ENCODE measurements at regions of chr15 and their contacts with region 1.

Region 1: GRCh38 chr15:45457641-45458433 is 64.7 kb downstream of the SLC30A4 start:
- DNase-seq: peak; percentile 92
- ATAC-seq: peak; percentile 73
- H3K4me3 ChIP-seq: peak overlapping the region; percentile 29 to 74 (median 49)
- H3K4me3 Mint-ChIP-seq: peak overlapping the region; percentile 84
- H3K27ac ChIP-seq: peak overlapping the region; percentile 52 to 62
- H3K27ac Mint-ChIP-seq: peak overlapping the region; percentile 72
- H3K4me1 ChIP-seq: peaks cover 34 to 37% of the 10 kb centered on the region in 2 donors
- H3K4me1 Mint-ChIP-seq: peaks cover 42% of the 10 kb centered on the region
- H3K27me3 ChIP-seq: no peaks in the 10 kb centered on the region
- H3K27me3 Mint-ChIP-seq: no peaks in the 10 kb centered on the region
- CTCF ChIP-seq: peak; percentile 94

Region 2: GRCh38 chr15:45166834-45167630 is 290.8 kb before region 1 on chr15:
- CTCF ChIA-PET with region 1: interaction called, 21 read pairs
- POLR2A ChIA-PET with region 1: no interaction called
- intact Hi-C with region 1: loop called (anchors 1 kb)
- DNase-seq: peak; percentile 89
- ATAC-seq: peak; percentile 94
- H3K4me3 ChIP-seq: peak overlapping the region; percentile 45 to 84 (median 81)
- H3K4me3 Mint-ChIP-seq: peak overlapping the region; percentile 80
- H3K27ac ChIP-seq: peak overlapping the region; percentile 89 to 96
- H3K27ac Mint-ChIP-seq: peak overlapping the region; percentile 92
- H3K4me1 ChIP-seq: peaks cover 12 to 46% of the 10 kb centered on the region in 2 donors
- H3K4me1 Mint-ChIP-seq: peaks cover 31% of the 10 kb centered on the region
- H3K27me3 ChIP-seq: no peaks in the 10 kb centered on the region
- H3K27me3 Mint-ChIP-seq: no peaks in the 10 kb centered on the region
- CTCF ChIP-seq: peak; percentile 75

Region 3: GRCh38 chr15:45424429-45424828 is 33.4 kb before region 1 on chr15:
- CTCF ChIA-PET with region 1: interaction called, 156 read pairs
- POLR2A ChIA-PET with region 1: no interaction called
- intact Hi-C with region 1: loop called (anchors 5 kb)
- DNase-seq: no peak
- ATAC-seq: no peak
- H3K4me3 ChIP-seq: no peak overlapping the region
- H3K4me3 Mint-ChIP-seq: no peak overlapping the region
- H3K27ac ChIP-seq: no peak overlapping the region
- H3K27ac Mint-ChIP-seq: no peak overlapping the region
- H3K4me1 ChIP-seq: no peaks in the 10 kb centered on the region
- H3K4me1 Mint-ChIP-seq: no peaks in the 10 kb centered on the region
- H3K27me3 ChIP-seq: no peaks in the 10 kb centered on the region
- H3K27me3 Mint-ChIP-seq: no peaks in the 10 kb centered on the region
- CTCF ChIP-seq: no peak

Region 4: DNA sequence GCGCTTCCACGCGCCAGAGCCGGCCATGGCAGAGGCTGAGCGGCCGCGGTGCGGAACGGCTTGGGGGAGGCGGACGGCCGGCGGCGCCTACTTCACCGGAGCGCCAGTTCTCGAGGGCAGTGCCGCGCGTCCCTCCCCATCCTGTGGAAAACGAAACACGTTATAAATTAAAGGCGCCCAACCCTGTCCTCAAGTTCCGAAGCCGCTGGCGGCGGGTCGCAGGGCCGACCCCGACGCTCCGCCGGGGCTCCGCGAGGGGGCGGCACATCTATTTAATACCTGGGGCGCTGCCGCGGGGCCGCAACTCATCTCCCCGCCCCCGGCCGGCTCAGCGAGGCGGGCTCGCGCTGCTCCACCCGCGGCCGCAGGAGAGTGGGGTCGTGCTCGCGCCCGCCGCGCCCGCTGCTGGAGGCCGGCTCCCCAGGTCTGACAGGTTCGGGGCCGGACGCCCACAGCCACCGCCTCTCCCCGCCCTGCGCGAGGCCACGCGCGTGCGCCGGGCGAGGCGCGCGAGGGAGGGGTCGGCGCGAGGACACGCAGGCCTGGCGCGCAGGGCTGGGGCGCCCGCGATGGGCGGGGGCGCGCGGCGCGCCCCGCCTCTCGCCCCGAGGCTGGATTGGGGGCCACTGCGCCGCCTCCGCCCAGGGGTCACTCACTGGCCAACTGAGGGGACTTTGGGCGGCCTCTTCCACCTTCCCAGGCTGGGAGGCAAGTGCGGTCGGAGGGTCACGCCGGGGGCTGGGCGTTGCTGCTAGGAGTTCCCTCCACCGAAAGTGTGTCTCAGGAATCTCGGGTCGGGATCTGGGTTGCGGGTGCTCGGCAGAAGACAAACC is 64.7 kb after region 1 on chr15 and contains the start of gene SLC30A4:
- CTCF ChIA-PET with region 1: interaction called, 3 read pairs
- POLR2A ChIA-PET with region 1: no interaction called
- intact Hi-C with region 1: loop called (anchors 1 kb)
- DNase-seq: peak; percentile 86
- ATAC-seq: peak; percentile 81
- H3K4me3 ChIP-seq: peak within 1 kb of the TSS; percentile 60 to 95 (median 73)
- H3K4me3 Mint-ChIP-seq: peak within 1 kb of the TSS; percentile 94
- H3K27ac ChIP-seq: peak within 1 kb of the TSS; percentile 26 to 64
- H3K27ac Mint-ChIP-seq: peak within 1 kb of the TSS; percentile 92
- H3K4me1 ChIP-seq: peaks cover 26 to 32% of the 10 kb centered on the region in 2 donors
- H3K4me1 Mint-ChIP-seq: peaks cover 43% of the 10 kb centered on the region
- H3K27me3 ChIP-seq: no peaks in the 10 kb centered on the region
- H3K27me3 Mint-ChIP-seq: no peaks in the 10 kb centered on the region
- CTCF ChIP-seq: peak; percentile 71
- total RNA-seq, gene SLC30A4: 9.1 and 11.0 TPM in 2 replicates

Region 5: GRCh38 chr15:45611305-45611704 is 153.5 kb after region 1 on chr15:
- CTCF ChIA-PET with region 1: interaction called, 187 read pairs
- POLR2A ChIA-PET with region 1: interaction called, 3 read pairs
- intact Hi-C with region 1: loop called (anchors 1 kb)
- DNase-seq: peak; percentile 57
- ATAC-seq: peak; percentile 39
- H3K4me3 ChIP-seq: no peak overlapping the region
- H3K4me3 Mint-ChIP-seq: no peak overlapping the region
- H3K27ac ChIP-seq: no peak overlapping the region
- H3K27ac Mint-ChIP-seq: no peak overlapping the region
- H3K4me1 ChIP-seq: peaks cover 15 to 17% of the 10 kb centered on the region in 2 donors
- H3K4me1 Mint-ChIP-seq: peaks cover 12% of the 10 kb centered on the region
- H3K27me3 ChIP-seq: no peaks in the 10 kb centered on the region
- H3K27me3 Mint-ChIP-seq: no peaks in the 10 kb centered on the region
- CTCF ChIP-seq: peak; percentile 77